ENCODE measurements at regions of chr19 and their contacts with region 1.

Region 1: DNA sequence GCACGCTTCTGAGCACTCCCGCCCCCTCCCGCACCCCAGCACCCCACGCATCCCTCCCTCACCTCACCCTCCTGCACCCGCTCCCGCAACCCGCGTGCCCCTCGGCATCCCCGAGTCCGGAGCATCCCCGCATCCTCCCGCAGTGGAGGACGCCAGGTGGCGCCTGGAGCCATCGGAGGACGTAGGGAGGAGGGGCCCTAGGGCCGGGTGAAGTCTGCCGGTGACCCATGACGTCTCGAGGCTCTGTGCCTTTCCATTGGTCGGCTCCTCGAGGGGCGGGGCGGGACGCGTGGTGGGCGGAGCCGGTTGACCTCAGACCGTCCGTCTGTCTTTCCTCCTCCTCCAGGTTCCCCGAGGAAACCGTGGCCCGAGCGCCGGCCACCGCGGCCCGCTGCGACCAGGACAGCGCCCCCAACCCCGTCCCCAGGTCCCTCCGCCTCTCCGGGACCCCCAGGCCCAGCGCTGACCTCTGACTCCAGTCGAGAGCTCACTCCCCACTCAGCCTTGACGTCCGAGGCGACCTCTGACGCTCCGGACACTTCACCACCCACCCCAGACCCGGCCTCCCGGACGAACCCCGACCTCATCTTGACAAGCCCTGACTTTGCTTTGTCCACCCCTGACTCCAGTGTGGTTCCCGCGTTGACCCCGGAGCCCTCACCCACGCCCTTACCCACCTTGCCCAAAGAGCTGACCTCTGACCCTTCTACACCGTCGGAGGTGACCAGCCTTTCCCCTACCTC is 19.9 kb downstream of the SBK2 start:
- DNase-seq: peak; percentile 91
- ATAC-seq: peak; percentile 99
- H3K4me3 ChIP-seq: peak overlapping the region; percentile 9
- H3K27ac ChIP-seq: peak overlapping the region; percentile 24
- H3K4me1 ChIP-seq: peaks cover 2% of the 10 kb centered on the region; the same call in 1 of the 2 replicates
- H3K27me3 ChIP-seq: no peaks in the 10 kb centered on the region
- CTCF ChIP-seq: peak; percentile 95
- POLR2A ChIP-seq: peak; percentile 44; the same call in 1 of the 2 replicates
- RAD21 ChIP-seq: peak; percentile 98

Region 2: GRCh38 chr19:55536951-55537740 is 20.1 kb after region 1 on chr19 and contains the start of gene SBK2:
- CTCF ChIA-PET with region 1: no interaction called
- POLR2A ChIA-PET with region 1: no interaction called
- dilution Hi-C with region 1: no loop called
- in situ Hi-C with region 1: no loop called
- intact Hi-C with region 1: loop called (anchors 2 kb)
- DNase-seq: no peak
- ATAC-seq: peak; percentile 40
- H3K4me3 ChIP-seq: no peak within 1 kb of the TSS
- H3K27ac ChIP-seq: no peak within 1 kb of the TSS
- H3K4me1 ChIP-seq: no peaks in the 10 kb centered on the region; the same call in 1 of the 2 replicates
- H3K27me3 ChIP-seq: no peaks in the 10 kb centered on the region; the same call in 1 of the 2 replicates
- CTCF ChIP-seq: peak; percentile 32; the same call in 1 of the 2 replicates
- POLR2A ChIP-seq: no peak
- RAD21 ChIP-seq: peak; percentile 17; the same call in 1 of the 2 replicates
- total RNA-seq, gene SBK2: not detected in 2 replicates

Region 3: GRCh38 chr19:55580628-55581144 is 63.6 kb after region 1 on chr19 and contains the start of gene ZNF579:
- CTCF ChIA-PET with region 1: no interaction called
- POLR2A ChIA-PET with region 1: no interaction called
- dilution Hi-C with region 1: no loop called
- in situ Hi-C with region 1: no loop called
- intact Hi-C with region 1: loop called (anchors 2 kb)
- DNase-seq: peak; percentile 91
- ATAC-seq: peak; percentile 86
- H3K4me3 ChIP-seq: peak within 1 kb of the TSS; percentile 87
- H3K27ac ChIP-seq: peak within 1 kb of the TSS; percentile 99
- H3K4me1 ChIP-seq: peaks cover 6% of the 10 kb centered on the region; the same call in 1 of the 2 replicates
- H3K27me3 ChIP-seq: no peaks in the 10 kb centered on the region
- CTCF ChIP-seq: no peak
- POLR2A ChIP-seq: no peak
- RAD21 ChIP-seq: peak; percentile 25; the same call in 1 of the 2 replicates
- total RNA-seq, gene ZNF579: 0.54 and 0.83 TPM in 2 replicates

Region 4: GRCh38 chr19:55605207-55605636 is 88.2 kb after region 1 on chr19:
- CTCF ChIA-PET with region 1: interaction called, 7 read pairs
- POLR2A ChIA-PET with region 1: no interaction called
- dilution Hi-C with region 1: no loop called
- in situ Hi-C with region 1: loop called (anchors 5 kb)
- intact Hi-C with region 1: loop called (anchors 1 kb)
- DNase-seq: peak; percentile 96
- ATAC-seq: peak; percentile 81
- H3K4me3 ChIP-seq: peak overlapping the region; percentile 76
- H3K27ac ChIP-seq: peak overlapping the region; percentile 91
- H3K4me1 ChIP-seq: peaks cover 9% of the 10 kb centered on the region
- H3K27me3 ChIP-seq: no peaks in the 10 kb centered on the region
- CTCF ChIP-seq: no peak
- POLR2A ChIP-seq: peak; percentile 48
- RAD21 ChIP-seq: no peak

Region 5: GRCh38 chr19:55632463-55632834 is 115.4 kb after region 1 on chr19:
- CTCF ChIA-PET with region 1: interaction called, 3 read pairs
- POLR2A ChIA-PET with region 1: no interaction called
- dilution Hi-C with region 1: no loop called
- in situ Hi-C with region 1: no loop called
- intact Hi-C with region 1: loop called (anchors 1 kb)
- DNase-seq: peak; percentile 96
- ATAC-seq: peak; percentile 73
- H3K4me3 ChIP-seq: no peak overlapping the region
- H3K27ac ChIP-seq: no peak overlapping the region
- H3K4me1 ChIP-seq: peaks cover 9% of the 10 kb centered on the region
- H3K27me3 ChIP-seq: no peaks in the 10 kb centered on the region
- CTCF ChIP-seq: peak; percentile 85
- POLR2A ChIP-seq: 0 out of 2 replicates have a peak, but pooled peaks have one; percentile 42
- RAD21 ChIP-seq: peak; percentile 79

Measured in IMR-90 (cell line).